ENCODE measurements at regions of chr11 and their contacts with region 1.

Region 1: GRCh38 chr11:130069684-130070108 is at the start of gene APLP2:
- DNase-seq: peak; percentile 99
- H3K4me3 Mint-ChIP-seq: peak within 1 kb of the TSS; percentile 85
- H3K27ac Mint-ChIP-seq: peak within 1 kb of the TSS; percentile 92
- H3K4me1 Mint-ChIP-seq: peaks cover 25% of the 10 kb centered on the region
- H3K27me3 Mint-ChIP-seq: no peaks in the 10 kb centered on the region
- CTCF ChIP-seq: no peak
- total RNA-seq, gene APLP2: 317 and 368 TPM in 2 replicates

Region 2: DNA sequence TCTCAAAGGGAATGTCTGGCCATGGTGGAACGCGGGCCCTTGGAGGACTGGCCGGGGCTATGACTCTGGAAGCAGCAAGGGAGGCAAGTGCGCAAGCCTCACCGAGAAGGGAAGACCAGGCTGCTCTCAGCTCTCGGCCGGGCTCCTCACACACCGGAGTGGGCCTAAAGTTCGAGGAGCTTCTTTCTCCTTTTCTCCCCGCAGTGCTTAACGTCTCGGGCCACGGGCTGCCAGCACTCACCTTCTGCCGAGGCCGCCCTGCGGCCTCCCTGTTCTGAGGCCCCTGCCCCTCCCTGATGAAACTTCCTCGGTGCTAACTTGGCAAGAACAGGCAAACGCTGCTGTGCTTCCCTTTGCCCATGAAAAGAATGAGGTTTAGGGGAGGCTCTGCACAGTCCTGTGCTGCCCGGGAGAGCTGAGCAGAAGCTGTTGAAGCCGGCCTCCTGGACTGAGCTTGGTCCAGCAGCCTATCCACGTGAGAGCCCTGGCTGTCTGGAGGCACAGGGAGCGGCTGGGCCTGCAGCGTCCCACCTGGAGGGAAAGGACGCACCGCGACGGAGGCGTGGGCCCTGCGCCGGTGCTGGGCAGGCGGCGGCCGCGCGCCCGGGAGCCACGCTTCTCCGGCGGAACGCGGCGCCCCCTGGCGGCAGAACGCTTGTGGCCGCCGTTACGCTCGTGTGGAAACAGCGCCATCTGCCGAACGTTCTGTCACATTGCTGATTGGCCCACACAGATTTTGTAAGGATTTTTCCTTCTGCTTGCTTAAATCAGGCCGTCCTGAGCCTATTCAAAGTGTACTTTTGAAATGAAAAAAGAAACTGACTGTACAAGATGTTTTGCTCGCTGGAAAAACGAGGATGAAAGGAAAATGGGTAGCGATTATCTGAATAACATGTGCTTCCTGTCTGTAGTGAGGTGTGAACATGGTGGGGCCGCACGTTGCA is 319.1 kb before region 1 on chr11:
- CTCF ChIA-PET with region 1: no interaction called
- POLR2A ChIA-PET with region 1: no interaction called
- intact Hi-C with region 1: no loop called
- DNase-seq: peak; percentile 72
- H3K4me3 Mint-ChIP-seq: no peak overlapping the region
- H3K27ac Mint-ChIP-seq: no peak overlapping the region
- H3K4me1 Mint-ChIP-seq: no peaks in the 10 kb centered on the region
- H3K27me3 Mint-ChIP-seq: peaks cover 13% of the 10 kb centered on the region
- CTCF ChIP-seq: peak; percentile 100

Region 3: DNA sequence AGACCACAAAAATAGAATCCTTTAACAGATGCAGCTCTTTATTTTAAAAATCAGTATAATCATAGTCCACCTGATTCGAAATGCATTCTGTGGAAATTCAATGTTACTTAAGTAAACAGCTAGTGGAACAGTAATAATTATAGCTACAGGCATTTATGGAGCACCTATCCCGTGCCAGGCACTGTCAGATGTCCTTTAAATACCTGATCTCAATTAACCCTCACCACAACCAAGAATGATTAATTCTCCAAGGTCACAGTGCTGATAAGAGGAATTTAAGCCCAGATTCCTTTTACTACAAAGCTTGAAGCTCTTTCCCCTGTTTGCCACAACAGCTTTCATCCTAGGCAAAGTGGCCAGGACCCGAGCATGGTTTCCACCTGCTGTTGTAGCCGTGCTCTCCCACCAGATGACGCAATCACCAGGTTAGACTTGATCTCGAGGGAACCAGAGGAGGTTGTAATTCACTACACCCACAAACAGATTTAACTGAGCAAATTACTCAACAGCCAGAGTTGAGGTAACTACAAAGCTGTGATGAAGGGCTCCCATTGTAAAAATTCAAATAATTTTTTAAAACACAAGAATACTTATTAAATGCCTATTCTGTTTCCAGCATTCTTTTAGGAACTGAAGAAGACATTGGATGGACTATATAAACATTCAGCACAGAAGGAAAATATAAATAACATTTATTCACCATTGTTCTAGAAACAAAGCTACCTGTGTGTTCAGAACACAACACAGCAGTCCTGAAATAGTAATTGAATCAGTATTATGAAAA is 77.3 kb before region 1 on chr11:
- CTCF ChIA-PET with region 1: interaction called, 8 read pairs
- POLR2A ChIA-PET with region 1: interaction called, 15 read pairs
- intact Hi-C with region 1: no loop called
- DNase-seq: peak; percentile 81
- H3K4me3 Mint-ChIP-seq: no peak overlapping the region
- H3K27ac Mint-ChIP-seq: no peak overlapping the region
- H3K4me1 Mint-ChIP-seq: peaks cover 24% of the 10 kb centered on the region
- H3K27me3 Mint-ChIP-seq: no peaks in the 10 kb centered on the region
- CTCF ChIP-seq: peak; percentile 32

Region 4: GRCh38 chr11:130037058-130037457 is 32.6 kb before region 1 on chr11:
- CTCF ChIA-PET with region 1: interaction called, 3 read pairs
- POLR2A ChIA-PET with region 1: interaction called, 28 read pairs
- intact Hi-C with region 1: loop called (anchors 1 kb)
- DNase-seq: peak; percentile 87
- H3K4me3 Mint-ChIP-seq: no peak overlapping the region
- H3K27ac Mint-ChIP-seq: peak overlapping the region; percentile 3
- H3K4me1 Mint-ChIP-seq: peaks cover 15% of the 10 kb centered on the region
- H3K27me3 Mint-ChIP-seq: no peaks in the 10 kb centered on the region
- CTCF ChIP-seq: no peak

Region 5: GRCh38 chr11:130087294-130087926 is 17.7 kb after region 1 on chr11:
- CTCF ChIA-PET with region 1: interaction called, 4 read pairs
- POLR2A ChIA-PET with region 1: interaction called, 66 read pairs
- intact Hi-C with region 1: no loop called
- DNase-seq: no peak
- H3K4me3 Mint-ChIP-seq: no peak overlapping the region
- H3K27ac Mint-ChIP-seq: no peak overlapping the region
- H3K4me1 Mint-ChIP-seq: peaks cover 24% of the 10 kb centered on the region
- H3K27me3 Mint-ChIP-seq: no peaks in the 10 kb centered on the region
- CTCF ChIP-seq: no peak

Region 6: DNA sequence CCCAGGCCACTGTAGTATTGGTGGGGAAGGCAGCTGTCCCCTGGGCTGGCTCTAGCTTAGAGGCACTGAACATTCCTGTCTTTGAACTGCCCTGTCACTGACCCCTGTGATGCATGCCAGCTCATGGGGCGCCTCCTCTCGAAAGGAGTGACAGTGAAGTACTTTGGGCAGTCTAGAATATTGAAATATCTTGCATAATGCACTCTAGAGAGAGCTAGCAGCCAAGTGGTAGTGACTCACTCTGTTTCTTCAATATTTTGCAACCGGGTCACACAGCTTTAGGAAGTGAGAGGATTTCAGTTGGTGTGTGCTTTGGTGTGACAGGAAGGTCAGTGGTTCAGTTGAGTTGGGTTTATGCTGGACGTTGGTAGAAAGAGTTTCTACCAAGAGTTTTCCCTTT is 54.4 kb after region 1 on chr11:
- CTCF ChIA-PET with region 1: interaction called, 3 read pairs
- POLR2A ChIA-PET with region 1: interaction called, 48 read pairs
- intact Hi-C with region 1: loop called (anchors 2 kb)
- DNase-seq: peak; percentile 95
- H3K4me3 Mint-ChIP-seq: peak overlapping the region; percentile 30
- H3K27ac Mint-ChIP-seq: peak overlapping the region; percentile 49
- H3K4me1 Mint-ChIP-seq: peaks cover 25% of the 10 kb centered on the region
- H3K27me3 Mint-ChIP-seq: no peaks in the 10 kb centered on the region
- CTCF ChIP-seq: no peak

Region 7: DNA sequence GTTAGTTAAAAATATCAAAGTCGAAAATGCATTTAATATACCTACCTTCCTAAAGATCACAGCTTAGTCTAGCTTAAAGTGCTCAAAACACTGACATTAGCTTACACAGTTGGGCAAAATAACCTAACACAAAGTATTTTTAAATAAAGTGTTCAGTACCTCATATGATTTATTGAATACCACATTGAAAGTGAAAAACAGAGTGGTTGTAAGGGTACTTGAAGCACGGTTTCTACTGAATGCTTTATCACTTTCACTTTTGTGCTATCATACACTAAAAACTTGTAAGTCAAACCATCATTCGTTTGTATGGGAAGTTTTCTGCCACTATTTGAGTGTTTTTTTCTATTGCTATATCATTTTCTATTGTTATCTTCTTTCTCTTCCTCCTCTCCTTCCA is 208.5 kb after region 1 on chr11:
- CTCF ChIA-PET with region 1: no interaction called
- POLR2A ChIA-PET with region 1: no interaction called
- intact Hi-C with region 1: no loop called
- DNase-seq: no peak
- H3K4me3 Mint-ChIP-seq: no peak overlapping the region
- H3K27ac Mint-ChIP-seq: no peak overlapping the region
- H3K4me1 Mint-ChIP-seq: peaks cover 12% of the 10 kb centered on the region
- H3K27me3 Mint-ChIP-seq: no peaks in the 10 kb centered on the region
- CTCF ChIP-seq: no peak

Measured in MCF 10A (cell line).